PC-3 (cell line): ENCODE measurements at regions of chr1 and their contacts with region 1.

Region 1: DNA sequence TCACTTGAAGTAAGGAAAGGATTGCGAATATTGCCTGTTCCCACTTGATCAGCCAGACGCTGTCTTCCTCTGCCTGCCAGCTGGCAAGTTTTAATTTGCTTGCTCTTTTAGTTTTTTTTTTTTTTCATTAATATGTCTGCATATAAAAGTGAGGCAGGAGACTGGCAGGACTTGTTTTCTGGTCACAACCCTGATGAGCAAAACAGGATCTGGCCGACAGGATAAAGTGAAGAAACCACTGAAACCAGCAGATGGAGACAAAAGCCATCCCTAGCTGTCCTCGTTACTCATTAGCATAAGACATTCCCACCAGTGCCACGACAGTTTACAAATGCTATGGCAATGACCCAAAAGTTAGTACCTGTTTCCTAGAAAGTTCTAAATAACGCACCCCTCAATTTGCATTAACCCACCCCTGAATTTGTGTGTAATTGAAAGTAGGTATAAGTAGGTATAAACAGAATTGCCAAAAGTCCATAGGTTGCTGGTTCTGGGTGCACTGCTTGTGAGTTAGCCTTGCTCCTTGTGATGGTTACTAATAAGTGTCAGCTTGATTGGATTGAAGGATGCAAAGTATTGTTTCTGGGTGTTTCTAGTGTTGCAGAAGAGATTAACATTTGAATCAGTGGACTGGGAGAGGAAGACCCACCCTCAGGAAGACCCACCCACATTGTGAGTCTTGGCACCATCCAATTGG is 60.8 kb downstream of the ZNF684 start:
- DNase-seq: peak; percentile 64
- ATAC-seq: peak; percentile 59
- H3K4me3 ChIP-seq: no peak overlapping the region
- H3K27ac ChIP-seq: no peak overlapping the region
- H3K4me1 ChIP-seq: no peaks in the 10 kb centered on the region
- H3K27me3 ChIP-seq: peaks cover 4% of the 10 kb centered on the region; the same call in 1 of the 2 replicates
- CTCF ChIP-seq: peak; percentile 66

Region 2: GRCh38 chr1:40736085-40736531 is 143.9 kb after region 1 on chr1:
- CTCF ChIA-PET with region 1: no interaction called
- POLR2A ChIA-PET with region 1: no interaction called
- intact Hi-C with region 1: no loop called
- DNase-seq: no peak
- ATAC-seq: no peak
- H3K4me3 ChIP-seq: no peak overlapping the region
- H3K27ac ChIP-seq: no peak overlapping the region
- H3K4me1 ChIP-seq: no peaks in the 10 kb centered on the region
- H3K27me3 ChIP-seq: no peaks in the 10 kb centered on the region
- CTCF ChIP-seq: no peak

Region 3: GRCh38 chr1:40824591-40825434 is 232.6 kb after region 1 on chr1:
- CTCF ChIA-PET with region 1: interaction called, 11 read pairs
- POLR2A ChIA-PET with region 1: no interaction called
- intact Hi-C with region 1: no loop called
- DNase-seq: no peak
- ATAC-seq: no peak
- H3K4me3 ChIP-seq: no peak overlapping the region
- H3K27ac ChIP-seq: no peak overlapping the region
- H3K4me1 ChIP-seq: no peaks in the 10 kb centered on the region
- H3K27me3 ChIP-seq: no peaks in the 10 kb centered on the region
- CTCF ChIP-seq: no peak